Head of caudate nucleus (tissue), 42 donors: ENCODE measurements at regions of chr18 and their contacts with region 1.

Region 1: GRCh38 chr18:80034068-80034851 is at the start of gene RBFA:
- DNase-seq: peak; percentile 97 to 100 (median 100)

Region 2: GRCh38 chr18:79679111-79679872 is 355.0 kb before region 1 on chr18 and contains the start of gene CTDP1:
- intact Hi-C with region 1: loop called (anchors 5 kb)
- DNase-seq: peak; percentile 99 to 100 (median 100)

Region 3: DNA sequence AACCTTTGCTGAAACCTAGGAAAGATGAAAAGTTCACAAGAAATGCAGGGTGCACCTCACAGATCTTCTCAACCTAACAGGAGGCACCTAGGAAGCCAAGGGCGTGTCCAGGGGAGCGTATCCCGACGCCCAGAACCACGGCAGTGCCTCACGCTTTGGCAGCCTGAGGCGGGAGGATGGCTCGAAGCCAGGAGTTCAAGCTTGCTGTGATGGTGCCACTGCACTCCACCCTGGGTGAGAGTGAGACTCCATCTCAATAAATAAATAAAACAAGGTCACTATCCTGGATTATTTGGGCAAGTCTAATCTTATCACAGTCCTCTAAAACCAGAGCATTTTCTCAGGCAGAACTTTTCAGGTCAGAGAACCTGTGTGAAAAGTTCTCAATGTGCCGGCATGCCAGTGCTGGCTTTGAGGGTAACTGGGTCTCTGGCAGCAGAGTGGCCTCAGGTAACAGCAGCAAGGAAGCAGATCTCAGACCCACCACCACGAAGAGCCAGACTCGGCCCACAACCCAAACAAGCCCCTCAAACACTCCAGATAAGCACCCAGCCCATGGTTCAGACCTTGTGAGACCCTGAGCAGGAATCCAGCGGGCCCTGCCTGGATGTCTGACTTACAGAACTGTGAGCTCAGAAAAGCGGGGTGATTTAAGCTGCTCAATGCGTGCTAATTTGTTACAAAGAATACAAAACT is 58.1 kb before region 1 on chr18:
- intact Hi-C with region 1: no loop called
- DNase-seq: no peak

Region 4: GRCh38 chr18:79988451-79989194 is 45.6 kb before region 1 on chr18 and contains the start of gene TXNL4A:
- intact Hi-C with region 1: loop called (anchors 5 kb)
- DNase-seq: peak; percentile 72 to 95 (median 89)

Region 5: DNA sequence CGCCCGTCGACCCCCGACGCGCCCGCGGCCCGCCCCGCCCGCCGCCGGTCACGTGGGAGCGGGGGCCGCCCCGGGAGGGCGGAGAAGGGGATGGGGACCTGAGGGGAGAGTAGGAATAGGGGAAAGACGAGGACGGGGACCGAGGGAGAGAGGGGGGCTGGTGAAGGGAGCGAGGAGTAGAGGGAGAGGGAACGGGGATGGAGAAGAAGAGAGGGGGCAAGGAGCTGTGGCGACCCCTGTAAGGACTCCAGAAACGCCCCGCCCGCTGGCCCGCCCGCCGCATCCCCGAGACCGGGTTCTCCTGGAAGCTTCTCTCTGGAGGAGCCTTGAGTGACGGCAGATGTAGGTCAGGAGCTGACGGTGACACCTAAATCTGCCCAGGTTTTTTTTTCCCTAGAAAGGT is 75.4 kb after region 1 on chr18:
- intact Hi-C with region 1: loop called (anchors 10 kb)
- DNase-seq: peak in 40 of 42 donors; percentile 24 to 85 (median 57)

Region 6: GRCh38 chr18:80171054-80171872 is 137.0 kb after region 1 on chr18:
- intact Hi-C with region 1: no loop called
- DNase-seq: peak; percentile 35 to 89 (median 76)